Right lobe of liver (tissue), 6 donors: ENCODE measurements at regions of chr10 and their contacts with region 1.

Region 1: GRCh38 chr10:132023092-132023811 is 41.5 kb upstream of the BNIP3 start:
- DNase-seq: peak; percentile 82 to 84 (median 82)
- ATAC-seq: peak; percentile 93 to 99 (median 98)
- H3K4me3 ChIP-seq: peak overlapping the region; percentile 31 to 38 (median 33)
- H3K27ac ChIP-seq: no peak overlapping the region
- H3K4me1 ChIP-seq: peaks cover 0 to 8% (median 0%) of the 10 kb centered on the region in 4 donors
- H3K27me3 ChIP-seq: no peaks in the 10 kb centered on the region
- CTCF ChIP-seq: peak; percentile 89 to 94 (median 92)
- POLR2A ChIP-seq: no peak

Region 2: GRCh38 chr10:131885391-131886161 is 137.7 kb before region 1 on chr10:
- intact Hi-C with region 1: loop called (anchors 5 kb)
- DNase-seq: peak; percentile 79 to 81 (median 79)
- ATAC-seq: peak; percentile 99 to 100 (median 100)
- H3K4me3 ChIP-seq: no peak overlapping the region
- H3K27ac ChIP-seq: no peak overlapping the region
- H3K4me1 ChIP-seq: no peaks in the 10 kb centered on the region
- H3K27me3 ChIP-seq: no peaks in the 10 kb centered on the region
- CTCF ChIP-seq: peak; percentile 96 to 98 (median 98)
- POLR2A ChIP-seq: no peak

Region 3: GRCh38 chr10:131899695-131900349 is 123.4 kb before region 1 on chr10:
- intact Hi-C with region 1: loop called in 1 of 2 experiments (anchors 5 kb)
- DNase-seq: no peak
- ATAC-seq: no peak
- H3K4me3 ChIP-seq: peak overlapping the region; percentile 88 to 96 (median 90)
- H3K27ac ChIP-seq: no peak overlapping the region
- H3K4me1 ChIP-seq: peaks cover 0 to 22% (median 4%) of the 10 kb centered on the region in 4 donors
- H3K27me3 ChIP-seq: no peaks in the 10 kb centered on the region
- CTCF ChIP-seq: no peak
- POLR2A ChIP-seq: no peak

Region 4: GRCh38 chr10:132133005-132133404 is 109.8 kb after region 1 on chr10:
- intact Hi-C with region 1: no loop called
- DNase-seq: peak in 2 of 3 donors; percentile 9 to 26
- ATAC-seq: no peak
- H3K4me3 ChIP-seq: no peak overlapping the region
- H3K27ac ChIP-seq: no peak overlapping the region
- H3K4me1 ChIP-seq: no peaks in the 10 kb centered on the region
- H3K27me3 ChIP-seq: no peaks in the 10 kb centered on the region
- CTCF ChIP-seq: no peak
- POLR2A ChIP-seq: no peak